Activated CD8-positive, alpha-beta T cell treated with anti-CD3 and anti-CD28 coated beads for 36 hours (primary cell): ENCODE measurements at regions of chr1 and their contacts with region 1.

Region 1: DNA sequence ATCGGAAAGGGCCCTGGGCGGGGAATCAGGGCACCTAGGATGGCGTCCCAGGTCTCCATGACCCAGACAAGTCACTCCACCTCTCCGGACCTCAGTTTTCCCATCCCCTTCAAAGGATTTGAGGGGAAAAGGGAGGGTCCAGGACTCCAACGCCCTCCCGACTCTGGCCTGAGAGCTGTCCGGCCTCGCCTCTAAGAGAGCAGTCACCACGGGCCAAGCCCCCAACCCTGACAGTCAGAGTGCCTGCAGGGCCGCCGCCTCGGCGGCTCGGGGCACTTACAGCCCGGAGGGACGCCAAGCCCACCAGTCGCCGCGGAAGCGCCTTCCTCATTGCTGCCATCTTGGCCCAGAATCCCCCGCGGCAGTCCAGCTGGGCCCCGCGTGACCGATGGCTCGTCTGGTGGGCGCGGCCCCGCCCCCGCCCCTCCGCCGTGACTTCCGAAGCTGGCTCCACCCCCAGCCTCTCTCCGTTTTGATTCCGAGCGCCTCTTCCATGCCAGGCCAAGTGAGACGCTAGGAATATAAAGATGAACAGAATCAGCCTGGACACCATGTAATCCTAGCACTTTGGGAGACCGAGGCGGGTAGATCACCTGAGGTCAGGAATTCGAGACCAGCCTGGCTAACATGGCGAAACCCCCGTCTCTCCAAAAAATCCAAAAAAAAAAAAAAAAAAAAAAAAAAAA is at the start of gene HMGCL:
- DNase-seq: peak; percentile 94
- ATAC-seq: peak; percentile 98
- H3K4me3 Mint-ChIP-seq: peak within 1 kb of the TSS; percentile 97
- H3K27ac Mint-ChIP-seq: peak within 1 kb of the TSS; percentile 96
- H3K4me1 Mint-ChIP-seq: peaks cover 20% of the 10 kb centered on the region
- H3K27me3 Mint-ChIP-seq: no peaks in the 10 kb centered on the region
- CTCF ChIP-seq: no peak
- total RNA-seq, gene HMGCL: 44.9 to 46.0 TPM

Region 2: GRCh38 chr1:23838401-23838866 is 13.2 kb after region 1 on chr1:
- CTCF ChIA-PET with region 1: interaction called, 3 read pairs
- POLR2A ChIA-PET with region 1: interaction called, 13 read pairs
- intact Hi-C with region 1: no loop called
- DNase-seq: peak; percentile 84
- ATAC-seq: peak; percentile 100
- H3K4me3 Mint-ChIP-seq: peak overlapping the region; percentile 65
- H3K27ac Mint-ChIP-seq: no peak overlapping the region
- H3K4me1 Mint-ChIP-seq: peaks cover 12% of the 10 kb centered on the region
- H3K27me3 Mint-ChIP-seq: peaks cover 3% of the 10 kb centered on the region
- CTCF ChIP-seq: no peak